ENCODE measurements at regions of chr19 and their contacts with region 1.

Region 1: DNA sequence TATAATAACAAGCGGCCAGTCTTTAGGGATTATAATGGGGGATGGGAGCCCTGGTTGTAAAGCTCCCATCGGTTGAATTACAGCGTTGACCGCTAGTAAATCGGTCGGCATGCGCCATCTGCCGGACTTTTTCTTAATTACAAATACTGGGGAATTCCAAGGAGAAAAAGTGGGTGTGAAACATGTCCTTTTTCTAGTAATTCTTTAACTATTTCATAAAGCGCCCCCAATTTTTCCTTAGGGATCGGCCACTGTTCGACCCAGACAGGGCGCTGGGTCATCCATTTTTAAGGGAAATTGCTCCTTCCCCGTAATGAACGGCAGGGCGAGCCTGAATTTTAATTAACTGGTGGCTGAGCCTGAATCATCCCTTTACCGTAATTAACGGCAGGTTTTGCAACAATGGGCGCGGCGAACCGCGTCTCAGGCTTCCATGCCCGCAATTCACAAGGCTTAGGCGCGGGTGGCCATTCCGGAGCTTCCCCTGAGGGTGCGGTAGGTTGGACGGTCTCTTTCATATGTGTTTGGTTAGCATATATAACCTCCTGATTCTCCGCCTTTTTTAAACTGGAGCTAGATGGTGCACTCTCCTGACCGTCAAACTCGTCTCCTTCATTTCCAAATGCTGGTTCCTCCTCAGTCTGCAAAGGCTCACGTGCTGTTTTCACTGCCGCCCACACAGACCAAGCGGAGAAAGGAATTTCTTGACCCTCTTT is 30.2 kb upstream of the EVI5L start:
- DNase-seq: peak; percentile 45 to 67
- ATAC-seq: peak; percentile 77 to 83
- H3K4me3 ChIP-seq: peak overlapping the region; percentile 24; the same call in 1 of the 3 replicates
- H3K27ac ChIP-seq: no peak overlapping the region
- H3K4me1 ChIP-seq: no peaks in the 10 kb centered on the region
- CTCF ChIP-seq: peak; percentile 60
- EP300 ChIP-seq: no peak
- POLR2A ChIP-seq: no peak
- RAD21 ChIP-seq: peak; percentile 68 to 75

Region 2: GRCh38 chr19:7692417-7693088 is 107.2 kb before region 1 on chr19:
- CTCF ChIA-PET with region 1: no interaction called
- POLR2A ChIA-PET with region 1: no interaction called
- DNase-seq: no peak
- ATAC-seq: no peak
- H3K4me3 ChIP-seq: no peak overlapping the region
- H3K27ac ChIP-seq: no peak overlapping the region
- H3K4me1 ChIP-seq: no peaks in the 10 kb centered on the region
- CTCF ChIP-seq: no peak
- EP300 ChIP-seq: no peak
- POLR2A ChIP-seq: no peak
- RAD21 ChIP-seq: no peak

Region 3: GRCh38 chr19:7762719-7763293 is 37.0 kb before region 1 on chr19 and contains the start of gene CLEC4M:
- CTCF ChIA-PET with region 1: no interaction called
- POLR2A ChIA-PET with region 1: no interaction called
- DNase-seq: no peak
- ATAC-seq: no peak
- H3K4me3 ChIP-seq: no peak within 1 kb of the TSS
- H3K27ac ChIP-seq: no peak within 1 kb of the TSS
- H3K4me1 ChIP-seq: no peaks in the 10 kb centered on the region
- CTCF ChIP-seq: no peak
- EP300 ChIP-seq: no peak
- POLR2A ChIP-seq: no peak
- RAD21 ChIP-seq: no peak
- polyA plus RNA-seq, gene CLEC4M: not detected in 2 replicates

Region 4: GRCh38 chr19:7787141-7787540 is 12.7 kb before region 1 on chr19:
- CTCF ChIA-PET with region 1: interaction called, 10 read pairs
- POLR2A ChIA-PET with region 1: no interaction called
- DNase-seq: no peak
- ATAC-seq: no peak
- H3K4me3 ChIP-seq: no peak overlapping the region
- H3K27ac ChIP-seq: no peak overlapping the region
- H3K4me1 ChIP-seq: peaks cover 7% of the 10 kb centered on the region; the same call in 2 of the 3 replicates
- CTCF ChIP-seq: no peak
- EP300 ChIP-seq: no peak
- POLR2A ChIP-seq: no peak
- RAD21 ChIP-seq: no peak

Region 5: GRCh38 chr19:7811989-7812388 is 12.2 kb after region 1 on chr19:
- CTCF ChIA-PET with region 1: interaction called, 25 read pairs
- POLR2A ChIA-PET with region 1: no interaction called
- DNase-seq: no peak
- ATAC-seq: no peak
- H3K4me3 ChIP-seq: no peak overlapping the region
- H3K27ac ChIP-seq: no peak overlapping the region
- H3K4me1 ChIP-seq: no peaks in the 10 kb centered on the region
- CTCF ChIP-seq: no peak
- EP300 ChIP-seq: no peak
- POLR2A ChIP-seq: no peak
- RAD21 ChIP-seq: no peak